ENCODE measurements at regions of chr3 and their contacts with region 1.

Region 1: GRCh38 chr3:105836533-105836932 is 32.3 kb downstream of the CBLB start:
- DNase-seq: no peak
- H3K4me3 Mint-ChIP-seq: peak overlapping the region; percentile 47
- H3K27ac Mint-ChIP-seq: peak overlapping the region; percentile 83
- H3K4me1 Mint-ChIP-seq: peaks cover 67% of the 10 kb centered on the region
- H3K27me3 Mint-ChIP-seq: no peaks in the 10 kb centered on the region

Region 2: DNA sequence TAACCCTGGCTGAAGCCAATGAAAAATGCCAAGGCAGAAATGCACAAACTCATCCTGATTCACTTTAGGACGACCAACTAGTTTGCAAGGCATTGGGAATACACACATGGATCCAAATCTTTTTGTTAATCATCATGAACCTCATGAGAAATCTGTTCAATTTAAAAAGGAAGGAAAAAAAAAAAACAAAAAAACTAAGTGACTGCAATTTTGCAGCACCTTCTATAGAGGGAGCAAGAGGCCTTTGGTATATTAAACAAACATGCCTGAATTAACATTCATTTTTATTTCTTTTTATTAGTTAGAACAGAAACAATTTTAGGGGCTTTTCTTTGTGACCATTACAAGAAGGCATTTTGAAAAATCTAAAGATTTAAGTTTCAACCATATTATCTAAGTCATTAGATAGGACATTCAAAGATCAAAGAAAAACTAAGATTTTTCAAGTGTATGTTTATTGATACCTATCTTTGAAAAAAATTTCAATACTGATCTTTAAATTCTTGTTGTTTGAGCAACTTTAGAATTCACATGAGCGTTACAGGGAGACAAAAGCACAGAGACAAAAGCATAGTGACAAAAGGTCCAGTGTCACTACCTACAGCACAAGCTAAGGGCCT is 150.1 kb before region 1 on chr3:
- intact Hi-C with region 1: no loop called
- DNase-seq: no peak
- H3K4me3 Mint-ChIP-seq: no peak overlapping the region
- H3K27ac Mint-ChIP-seq: peak overlapping the region; percentile 72
- H3K4me1 Mint-ChIP-seq: peaks cover 26% of the 10 kb centered on the region
- H3K27me3 Mint-ChIP-seq: no peaks in the 10 kb centered on the region

Region 3: GRCh38 chr3:105700575-105700974 is 136.0 kb before region 1 on chr3:
- intact Hi-C with region 1: loop called (anchors 1 kb)
- DNase-seq: no peak
- H3K4me3 Mint-ChIP-seq: no peak overlapping the region
- H3K27ac Mint-ChIP-seq: peak overlapping the region; percentile 60
- H3K4me1 Mint-ChIP-seq: peaks cover 42% of the 10 kb centered on the region
- H3K27me3 Mint-ChIP-seq: no peaks in the 10 kb centered on the region

Region 4: DNA sequence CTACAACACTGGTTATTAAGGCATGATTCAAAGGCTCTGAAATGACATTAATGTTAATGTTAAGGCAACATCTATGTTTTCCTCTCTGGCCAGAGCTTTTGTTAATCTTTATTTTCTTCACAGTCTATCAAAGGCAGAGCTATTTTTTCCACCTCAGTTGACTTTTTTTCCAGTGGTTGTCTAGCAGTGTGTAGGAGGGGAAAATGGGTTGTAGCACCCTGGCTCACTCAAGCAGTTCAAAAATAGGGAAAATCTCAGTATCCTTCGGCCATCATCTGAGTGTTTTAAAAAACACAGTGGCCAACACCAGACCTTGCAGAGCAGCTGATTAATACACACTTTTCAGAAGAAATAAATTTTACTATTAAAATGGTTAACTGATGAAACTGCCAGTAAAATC is 10.9 kb after region 1 on chr3:
- intact Hi-C with region 1: loop called (anchors 1 kb)
- DNase-seq: no peak
- H3K4me3 Mint-ChIP-seq: peak overlapping the region; percentile 43
- H3K27ac Mint-ChIP-seq: peak overlapping the region; percentile 91
- H3K4me1 Mint-ChIP-seq: peaks cover 53% of the 10 kb centered on the region
- H3K27me3 Mint-ChIP-seq: no peaks in the 10 kb centered on the region

Region 5: DNA sequence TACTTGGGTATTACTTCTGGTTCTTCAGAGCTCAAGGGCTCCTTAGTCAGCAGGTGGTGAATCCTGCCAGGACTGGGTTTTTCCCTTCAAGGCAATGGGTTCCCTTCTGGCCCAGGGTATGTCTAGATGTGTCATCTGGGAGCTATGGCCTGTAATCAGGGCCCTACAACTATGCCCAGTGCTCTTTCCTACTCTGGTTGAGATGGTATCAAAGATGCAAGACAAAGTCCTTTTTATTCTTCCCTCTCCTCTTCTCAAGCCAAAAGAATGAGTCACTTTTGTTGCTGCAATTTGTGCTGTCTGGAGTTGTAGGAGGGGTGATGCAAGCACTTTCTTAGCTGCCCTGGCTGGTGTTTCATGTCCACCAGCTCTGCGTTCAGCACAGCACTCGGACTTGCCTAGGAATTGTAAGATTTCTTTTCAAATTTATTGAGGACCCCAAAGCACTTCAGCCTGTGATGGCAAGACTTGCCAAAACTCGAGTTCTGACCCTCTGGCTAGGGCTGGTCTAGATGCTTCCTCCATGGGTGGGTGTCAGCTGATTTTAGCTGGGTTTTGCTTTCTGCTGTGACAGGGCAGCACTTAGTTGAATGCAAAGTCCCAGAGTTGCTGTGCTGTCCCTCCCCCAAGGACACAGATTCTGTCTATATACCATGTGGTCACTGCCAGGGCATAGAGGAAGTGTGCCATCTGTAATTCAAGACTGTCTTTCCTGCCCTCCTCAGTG is 161.4 kb after region 1 on chr3:
- intact Hi-C with region 1: no loop called
- DNase-seq: no peak
- H3K4me3 Mint-ChIP-seq: no peak overlapping the region
- H3K27ac Mint-ChIP-seq: no peak overlapping the region
- H3K4me1 Mint-ChIP-seq: peaks cover 10% of the 10 kb centered on the region
- H3K27me3 Mint-ChIP-seq: no peaks in the 10 kb centered on the region

Measured in activated T-helper 2 cell treated with anti-CD3 and anti-CD28 coated beads, Interferon-gamma antibody, Interleukin-2, Interleukin-4, amounts not matched to agents 10 μg/mL and 5 μg/mL and 100 μg/mL, durations not matched to agents 14 hours and 24 hours and 36 hours (primary cell).